Dorsolateral prefrontal cortex (tissue), 120 donors: ENCODE measurements at regions of chr10 and their contacts with region 1.

Region 1: GRCh38 chr10:119650692-119651513 is at the start of gene BAG3:
- DNase-seq: peak; percentile 72 to 90 (median 86)
- H3K4me3 ChIP-seq: peak within 1 kb of the TSS; percentile 61 to 92 (median 82)
- H3K27ac ChIP-seq: peak within 1 kb of the TSS; percentile 23 to 99 (median 93)
- H3K27me3 ChIP-seq: peaks cover 0 to 9% (median 0%) of the 10 kb centered on the region in 45 donors
- CTCF ChIP-seq: peak in 8 of 56 donors; percentile 11 to 24 (median 18)
- total RNA-seq, gene BAG3: 13.1 to 274 (median 32.3) TPM

Region 2: GRCh38 chr10:119725828-119726675 is 75.1 kb after region 1 on chr10 and contains the start of gene INPP5F:
- intact Hi-C with region 1: loop called in 1 of 2 experiments (anchors 2 kb)
- DNase-seq: peak; percentile 94 to 99 (median 98)
- H3K4me3 ChIP-seq: peak within 1 kb of the TSS; percentile 59 to 99 (median 85)
- H3K27ac ChIP-seq: peak within 1 kb of the TSS; percentile 63 to 96 (median 91)
- H3K27me3 ChIP-seq: no peaks in the 10 kb centered on the region
- CTCF ChIP-seq: peak in 48 of 56 donors; percentile 26 to 73 (median 50)
- total RNA-seq, gene INPP5F: 46.3 to 226 (median 146) TPM

Region 3: GRCh38 chr10:119776536-119776935 is 125.6 kb after region 1 on chr10:
- intact Hi-C with region 1: no loop called
- DNase-seq: no peak
- H3K4me3 ChIP-seq: no peak overlapping the region
- H3K27ac ChIP-seq: no peak overlapping the region
- H3K27me3 ChIP-seq: no peaks in the 10 kb centered on the region
- CTCF ChIP-seq: no peak